ENCODE measurements at regions of chr5 and their contacts with region 1.

Region 1: GRCh38 chr5:56270568-56271392 is 37.6 kb upstream of the ANKRD55 start:
- DNase-seq: peak; percentile 86
- ATAC-seq: peak; percentile 100
- H3K4me3 ChIP-seq: no peak overlapping the region
- H3K27ac ChIP-seq: no peak overlapping the region
- H3K4me1 ChIP-seq: peaks cover 9% of the 10 kb centered on the region
- H3K27me3 ChIP-seq: no peaks in the 10 kb centered on the region
- CTCF ChIP-seq: peak; percentile 98

Region 2: DNA sequence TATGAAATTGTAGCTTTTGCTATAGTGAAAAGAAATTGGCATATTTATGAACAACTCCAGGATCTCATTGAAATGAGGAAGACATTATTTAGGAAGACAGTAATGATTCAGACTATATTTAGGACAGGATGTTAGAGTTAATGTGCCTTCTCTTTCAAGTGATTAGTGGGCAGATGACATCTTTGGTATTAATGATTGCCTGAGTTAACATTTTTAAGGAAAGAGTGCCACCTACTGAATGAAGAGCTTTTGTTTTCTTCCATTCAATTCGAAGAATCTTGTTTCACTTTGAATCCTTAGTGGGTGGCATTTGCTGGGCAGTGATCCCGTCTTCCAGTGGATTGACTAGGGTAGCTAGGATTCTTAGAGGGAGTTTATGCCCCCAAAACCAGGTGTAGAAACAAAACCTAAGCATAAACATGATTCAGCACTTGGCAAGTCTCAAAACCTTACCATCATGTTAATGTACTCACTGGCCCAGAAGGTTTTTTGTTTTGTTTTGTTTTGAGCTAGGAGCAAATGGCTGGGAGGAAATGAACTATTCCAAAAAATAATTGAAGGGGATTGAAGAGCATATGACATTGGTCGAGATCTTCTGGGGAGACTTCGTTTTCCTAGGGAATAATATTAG is 567.7 kb after region 1 on chr5:
- intact Hi-C with region 1: loop called (anchors 5 kb)
- DNase-seq: no peak
- ATAC-seq: peak; percentile 80
- H3K4me3 ChIP-seq: no peak overlapping the region
- H3K27ac ChIP-seq: peak overlapping the region; percentile 43
- H3K4me1 ChIP-seq: peaks cover 22% of the 10 kb centered on the region
- H3K27me3 ChIP-seq: no peaks in the 10 kb centered on the region
- CTCF ChIP-seq: peak; percentile 61